Naive thymus-derived CD8-positive, alpha-beta T cell (primary cell): ENCODE measurements at regions of chr11 and their contacts with region 1.

Region 1: GRCh38 chr11:118010738-118011461 is 24.7 kb downstream of the IL10RA start:
- DNase-seq: peak in 1 of 10 donors; percentile 54
- ATAC-seq: peak; percentile 15 to 16
- H3K4me3 Mint-ChIP-seq: peak overlapping the region in 5 of 10 donors; percentile 28 to 66 (median 47)
- H3K27ac Mint-ChIP-seq: peak overlapping the region in 9 of 10 donors; percentile 60 to 100 (median 94)
- H3K4me1 Mint-ChIP-seq: peaks cover 68 to 100% (median 99%) of the 10 kb centered on the region in 4 donors
- H3K27me3 Mint-ChIP-seq: no peaks in the 10 kb centered on the region

Region 2: GRCh38 chr11:117759305-117759704 is 251.6 kb before region 1 on chr11:
- POLR2A ChIA-PET with region 1: no interaction called
- DNase-seq: no peak
- ATAC-seq: no peak
- H3K4me3 Mint-ChIP-seq: no peak overlapping the region
- H3K27ac Mint-ChIP-seq: no peak overlapping the region
- H3K4me1 Mint-ChIP-seq: peaks cover 0 to 2% (median 0%) of the 10 kb centered on the region in 4 donors
- H3K27me3 Mint-ChIP-seq: peaks cover 3 to 7% (median 4%) of the 10 kb centered on the region in 5 donors

Region 3: DNA sequence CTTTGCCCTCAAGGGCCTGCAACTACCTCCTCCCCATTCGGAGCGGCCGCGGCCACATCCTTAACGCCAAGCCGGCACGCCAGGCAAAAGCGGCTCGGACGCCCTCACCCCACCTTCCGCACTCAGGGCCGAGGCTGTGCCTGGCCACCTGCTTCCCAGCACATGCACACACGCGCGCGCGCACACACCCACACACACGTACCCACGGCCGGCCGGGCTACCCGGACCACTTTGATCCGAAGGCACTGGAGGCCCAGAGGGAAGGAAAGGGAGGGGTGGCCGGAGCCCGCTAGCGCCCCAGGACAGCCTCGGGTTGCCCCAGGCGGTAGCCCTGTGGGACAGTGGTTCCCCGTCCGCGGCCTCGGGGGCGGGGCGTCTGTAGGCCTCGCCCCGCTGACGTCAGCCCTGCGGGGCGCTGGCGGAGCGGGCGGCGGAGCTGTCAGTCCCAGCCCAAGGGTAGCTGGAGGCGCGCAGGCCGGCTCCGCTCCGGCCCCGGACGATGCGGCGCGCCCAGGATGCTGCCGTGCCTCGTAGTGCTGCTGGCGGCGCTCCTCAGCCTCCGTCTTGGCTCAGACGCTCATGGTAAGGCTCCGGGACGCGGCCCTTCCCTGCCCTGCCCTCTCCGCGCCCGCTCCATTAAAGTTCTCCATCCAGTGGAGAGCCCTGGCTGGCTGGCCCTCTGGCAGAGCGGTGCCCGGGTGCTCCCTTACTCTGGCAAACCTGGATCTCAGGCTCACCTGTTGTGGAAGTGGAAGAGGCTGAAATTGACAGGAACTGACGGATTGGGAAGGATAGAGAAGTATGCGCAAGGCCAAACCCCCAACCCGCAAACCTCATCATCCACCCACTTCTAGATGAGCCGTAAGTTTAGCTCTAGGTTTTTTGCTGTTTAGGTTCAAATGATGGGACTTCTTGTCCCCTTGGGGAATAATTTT is 24.7 kb before region 1 on chr11 and contains the start of gene IL10RA:
- POLR2A ChIA-PET with region 1: interaction called, 721 read pairs
- DNase-seq: peak; percentile 69 to 84 (median 80)
- ATAC-seq: peak; percentile 78 to 79
- H3K4me3 Mint-ChIP-seq: peak within 1 kb of the TSS; percentile 88 to 98 (median 93)
- H3K27ac Mint-ChIP-seq: peak within 1 kb of the TSS; percentile 89 to 99 (median 94)
- H3K4me1 Mint-ChIP-seq: peaks cover 41 to 86% (median 71%) of the 10 kb centered on the region in 4 donors
- H3K27me3 Mint-ChIP-seq: no peaks in the 10 kb centered on the region
- polyA plus RNA-seq, gene IL10RA: 99.2 to 185 (median 147) TPM

Region 4: GRCh38 chr11:118027691-118028090 is 16.8 kb after region 1 on chr11:
- POLR2A ChIA-PET with region 1: interaction called, 721 read pairs
- DNase-seq: no peak
- ATAC-seq: no peak
- H3K4me3 Mint-ChIP-seq: no peak overlapping the region
- H3K27ac Mint-ChIP-seq: peak overlapping the region in 1 of 10 donors; percentile 19
- H3K4me1 Mint-ChIP-seq: peaks cover 21 to 50% (median 27%) of the 10 kb centered on the region in 4 donors
- H3K27me3 Mint-ChIP-seq: no peaks in the 10 kb centered on the region

Region 5: GRCh38 chr11:118046051-118046963 is 35.4 kb after region 1 on chr11:
- POLR2A ChIA-PET with region 1: interaction called, 631 read pairs
- DNase-seq: peak in 8 of 10 donors; percentile 23 to 79 (median 58)
- ATAC-seq: peak; percentile 86 to 93
- H3K4me3 Mint-ChIP-seq: peak overlapping the region in 8 of 10 donors; percentile 25 to 67 (median 62)
- H3K27ac Mint-ChIP-seq: peak overlapping the region; percentile 89 to 98 (median 94)
- H3K4me1 Mint-ChIP-seq: peaks cover 48 to 95% (median 88%) of the 10 kb centered on the region in 4 donors
- H3K27me3 Mint-ChIP-seq: no peaks in the 10 kb centered on the region

Region 6: GRCh38 chr11:118290923-118291322 is 280.0 kb after region 1 on chr11:
- POLR2A ChIA-PET with region 1: interaction called, 10 read pairs
- DNase-seq: peak in 9 of 10 donors; percentile 12 to 69 (median 45)
- ATAC-seq: peak; percentile 67 to 82
- H3K4me3 Mint-ChIP-seq: peak overlapping the region in 1 of 10 donors; percentile 8
- H3K27ac Mint-ChIP-seq: peak overlapping the region in 4 of 10 donors; percentile 12 to 78 (median 42)
- H3K4me1 Mint-ChIP-seq: peaks cover 11 to 26% (median 17%) of the 10 kb centered on the region in 4 donors
- H3K27me3 Mint-ChIP-seq: peaks cover 0 to 1% (median 0%) of the 10 kb centered on the region in 5 donors